ENCODE measurements at regions of chr2 and their contacts with region 1.

Region 1: DNA sequence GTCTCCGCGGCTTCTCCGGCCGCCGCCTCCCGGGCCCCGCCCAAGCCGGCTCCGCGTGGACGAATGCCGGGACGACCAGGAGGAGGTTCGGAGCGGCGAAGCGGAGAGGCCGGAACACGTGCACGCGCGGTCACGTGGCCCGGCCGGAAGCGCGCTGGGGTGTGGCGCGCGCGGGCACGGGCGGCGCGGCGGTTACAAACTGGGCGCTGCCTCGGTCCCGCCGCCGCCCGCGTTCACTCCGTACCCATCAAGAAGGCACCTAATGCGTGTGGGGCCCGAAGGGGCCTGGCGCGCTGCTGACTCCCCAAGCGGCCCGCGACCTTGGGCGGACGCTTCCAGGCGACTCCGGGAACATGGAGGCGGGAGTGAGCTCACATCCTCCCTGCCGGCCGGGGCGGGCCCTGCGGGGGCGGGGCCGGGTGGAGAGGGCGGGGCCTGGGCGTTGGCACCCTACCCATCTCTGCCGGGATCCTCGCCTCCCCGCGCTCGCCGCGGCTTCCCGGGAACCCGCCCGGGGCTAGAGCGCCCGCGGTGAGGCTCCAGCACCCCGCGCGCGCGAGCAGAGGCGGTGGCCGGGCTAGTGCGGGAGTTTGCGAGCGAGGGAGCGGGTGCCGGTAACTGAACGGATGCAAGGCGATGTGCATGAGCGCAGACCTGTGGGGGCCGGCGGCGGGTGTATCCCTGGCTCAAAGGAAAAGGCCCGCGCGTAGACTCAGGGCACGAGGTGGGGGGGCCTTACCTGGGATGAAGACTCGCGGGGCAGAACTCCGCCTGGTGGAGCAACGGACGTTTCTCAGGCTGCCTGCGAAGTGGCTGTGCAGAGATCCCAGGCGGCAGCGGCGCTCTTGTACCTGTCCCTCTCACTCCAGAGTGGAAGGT is at the start of gene TMEM185B:
- DNase-seq: peak; percentile 95
- H3K4me3 ChIP-seq: peak within 1 kb of the TSS; percentile 58 to 76 (median 62)
- H3K27ac ChIP-seq: peak within 1 kb of the TSS; percentile 89 to 95 (median 93)
- H3K4me1 ChIP-seq: peaks cover 0 to 39% (median 23%) of the 10 kb centered on the region in 4 donors
- H3K27me3 ChIP-seq: no peaks in the 10 kb centered on the region
- CTCF ChIP-seq: peak in 2 of 4 experiments; percentile 12 to 15
- EP300 ChIP-seq: no peak
- POLR2A ChIP-seq: peak in 1 of 2 donors; percentile 17
- total RNA-seq, gene TMEM185B: 16.8 to 32.1 (median 25.0) TPM

Region 2: DNA sequence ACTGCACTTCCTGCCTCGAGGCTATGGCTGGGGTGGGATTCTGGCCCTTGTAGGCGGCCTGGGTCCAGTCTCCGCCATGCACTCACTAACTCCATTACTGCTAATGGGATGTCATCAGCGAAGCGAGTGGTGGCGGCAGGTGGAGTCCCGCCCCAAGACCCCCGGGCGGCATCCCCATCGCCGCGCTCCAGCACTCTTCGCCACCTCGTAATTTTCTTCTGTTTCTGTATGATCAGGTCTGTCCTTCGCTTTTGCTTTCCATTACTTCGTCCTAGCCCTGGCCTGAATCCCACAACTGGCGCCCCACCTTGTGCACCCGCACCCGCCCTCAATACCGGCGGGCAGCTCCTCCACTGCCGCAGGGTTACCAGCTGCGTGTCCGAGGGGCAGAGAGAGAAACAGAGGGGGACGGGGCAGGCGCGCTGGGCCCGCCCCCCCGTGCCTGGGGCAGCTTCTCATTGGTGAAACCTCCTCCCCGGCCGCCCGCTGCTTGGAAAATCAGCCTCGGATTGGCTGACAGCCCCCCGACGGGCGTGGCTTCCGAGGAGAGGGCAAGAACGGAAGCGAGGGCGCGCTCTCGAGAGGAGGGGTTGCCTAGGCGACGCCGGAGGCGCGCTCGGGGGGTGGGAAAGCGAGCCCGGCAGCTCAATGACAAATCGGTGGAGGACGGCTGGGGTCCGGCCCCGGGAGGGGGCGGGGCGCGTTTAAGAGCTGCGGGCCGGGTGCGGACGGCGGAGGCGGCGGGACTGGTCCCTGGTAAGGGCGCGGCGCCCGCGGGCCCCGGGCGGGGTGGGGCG is 29.1 kb after region 1 on chr2 and contains the start of gene RALB:
- intact Hi-C with region 1: loop called (anchors 1 kb)
- DNase-seq: peak; percentile 100
- H3K4me3 ChIP-seq: peak within 1 kb of the TSS; percentile 57 to 98 (median 88)
- H3K27ac ChIP-seq: peak within 1 kb of the TSS; percentile 85 to 94 (median 92)
- H3K4me1 ChIP-seq: peaks cover 0 to 27% (median 14%) of the 10 kb centered on the region in 4 donors
- H3K27me3 ChIP-seq: no peaks in the 10 kb centered on the region
- CTCF ChIP-seq: no peak
- EP300 ChIP-seq: no peak
- POLR2A ChIP-seq: peak; percentile 40 to 90
- total RNA-seq, gene RALB: 47.9 to 60.2 (median 50.5) TPM